HEK293T (cell line): ENCODE measurements at regions of chr4 and their contacts with region 1.

Region 1: GRCh38 chr4:95549246-95550114 is 707 bp upstream of the UNC5C start:
- DNase-seq: no peak

Region 2: DNA sequence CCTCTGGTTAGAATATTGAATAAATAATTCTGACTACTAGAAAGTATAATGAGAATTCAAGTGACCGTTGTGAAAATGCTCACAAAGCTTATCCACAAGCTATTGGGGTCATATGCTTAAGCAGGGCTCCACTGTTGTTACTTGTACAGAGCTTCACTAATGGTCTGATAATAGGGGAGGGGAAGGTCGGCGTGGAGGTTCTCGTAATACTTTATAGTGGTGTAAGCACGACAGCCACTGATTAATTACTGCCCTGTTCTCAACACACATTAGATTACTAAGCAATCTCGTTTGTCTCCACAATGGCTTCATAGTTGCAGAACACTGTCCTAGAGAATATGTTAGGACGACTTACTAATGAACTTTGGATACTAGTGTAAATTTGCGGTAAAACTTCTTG is 12.3 kb before region 1 on chr4:
- CTCF ChIA-PET with region 1: interaction called, 3 read pairs
- POLR2A ChIA-PET with region 1: interaction called, 15 read pairs
- DNase-seq: no peak